GM13976 (cell line): ENCODE measurements at regions of chr7 and their contacts with region 1.

Region 1: DNA sequence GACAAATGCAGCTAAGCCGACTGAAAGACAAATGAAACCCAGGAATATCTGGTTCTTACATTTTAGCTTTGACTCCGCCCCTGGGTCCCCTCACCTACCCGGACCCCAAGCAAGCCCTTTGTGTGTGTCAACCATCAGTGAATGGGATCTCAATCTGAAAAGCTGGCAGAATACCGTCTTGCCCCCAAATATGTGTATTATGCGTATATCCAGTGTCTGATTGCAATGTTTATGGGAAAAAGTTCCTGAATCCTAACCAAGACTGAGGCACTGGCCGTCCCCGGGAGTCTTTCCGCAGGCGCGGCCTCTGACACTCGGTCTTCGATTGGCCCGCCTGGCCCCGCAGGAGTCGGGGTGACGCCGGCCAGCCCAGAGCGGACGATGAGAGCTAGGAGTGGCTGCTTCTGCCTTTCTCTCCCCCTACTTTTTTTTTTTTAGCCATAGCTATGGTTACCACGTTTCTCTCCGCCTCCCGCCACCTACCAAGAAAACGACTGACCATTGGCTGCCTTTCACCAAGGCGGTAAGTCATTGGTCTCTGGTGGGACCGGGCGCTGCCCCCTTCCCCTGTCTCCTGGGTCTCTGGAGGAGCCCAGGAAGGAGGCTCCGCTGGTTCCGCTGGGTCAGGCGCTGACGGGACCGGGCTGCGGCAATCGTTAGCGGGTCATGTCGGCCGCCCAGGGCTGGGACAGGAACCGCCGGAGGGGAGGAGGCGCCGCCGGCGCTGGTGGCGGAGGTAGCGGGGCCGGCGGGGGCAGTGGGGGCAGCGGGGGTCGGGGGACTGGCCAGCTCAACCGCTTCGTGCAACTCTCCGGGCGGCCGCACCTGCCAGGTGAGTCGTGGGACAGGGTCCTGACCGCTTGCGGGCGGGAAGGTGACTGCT is at the start of gene KLHDC10:
- DNase-seq: peak; percentile 98
- CTCF ChIP-seq: no peak

Region 2: GRCh38 chr7:129989466-129989865 is 80.8 kb before region 1 on chr7:
- in situ Hi-C with region 1: no loop called
- DNase-seq: peak; percentile 73
- CTCF ChIP-seq: no peak

Region 3: GRCh38 chr7:130356121-130356875 is 286.1 kb after region 1 on chr7:
- in situ Hi-C with region 1: no loop called
- DNase-seq: no peak
- CTCF ChIP-seq: no peak

Region 4: DNA sequence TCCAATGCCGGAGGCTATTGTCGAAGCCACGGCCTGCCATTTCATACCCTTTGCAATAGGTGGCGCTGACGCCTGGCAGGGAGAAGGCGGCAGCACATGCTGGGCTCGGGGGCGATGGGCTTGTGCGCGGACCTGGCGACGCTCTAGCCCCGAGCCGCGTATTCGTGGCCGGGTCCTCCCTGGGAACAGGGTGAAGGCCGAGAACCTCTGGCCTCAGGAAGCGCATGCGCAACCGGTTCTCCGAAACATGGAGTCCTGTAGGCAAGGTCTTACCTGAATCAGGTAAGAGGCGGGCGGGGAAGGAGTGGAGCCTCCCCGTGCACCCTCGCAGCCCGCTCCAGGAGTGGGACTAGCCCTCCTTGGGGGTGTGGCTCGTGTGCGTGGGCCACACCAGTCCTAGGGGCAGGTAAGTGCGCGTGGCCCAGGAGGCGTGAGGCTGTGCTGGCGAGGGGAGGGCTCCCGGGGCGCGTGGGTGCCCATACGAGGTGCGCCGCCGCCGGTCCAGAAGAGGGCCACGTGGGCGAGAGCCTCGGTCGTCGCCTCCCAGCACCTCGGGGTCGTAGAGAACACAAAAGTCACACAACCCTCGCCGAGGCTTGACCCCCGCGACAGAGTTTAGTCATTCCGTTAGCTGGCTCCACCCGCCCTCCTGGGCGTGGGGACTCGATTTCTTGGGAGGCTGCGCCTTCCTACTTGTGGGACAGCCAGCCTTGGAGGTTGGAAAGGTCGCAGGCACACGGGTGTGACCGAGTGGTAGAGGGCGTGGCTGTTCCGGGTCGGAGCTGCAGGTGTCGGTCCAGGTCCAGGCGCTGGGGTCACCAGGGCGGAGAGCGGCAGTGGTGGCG is 416.1 kb after region 1 on chr7:
- in situ Hi-C with region 1: loop called (anchors 25 kb)
- DNase-seq: peak; percentile 72
- CTCF ChIP-seq: peak; percentile 81

Region 5: GRCh38 chr7:130758429-130759056 is 688.3 kb after region 1 on chr7:
- in situ Hi-C with region 1: loop called (anchors 10 kb)
- DNase-seq: peak; percentile 59
- CTCF ChIP-seq: peak; percentile 28